ENCODE measurements at regions of chr9 and their contacts with region 1.

Region 1: DNA sequence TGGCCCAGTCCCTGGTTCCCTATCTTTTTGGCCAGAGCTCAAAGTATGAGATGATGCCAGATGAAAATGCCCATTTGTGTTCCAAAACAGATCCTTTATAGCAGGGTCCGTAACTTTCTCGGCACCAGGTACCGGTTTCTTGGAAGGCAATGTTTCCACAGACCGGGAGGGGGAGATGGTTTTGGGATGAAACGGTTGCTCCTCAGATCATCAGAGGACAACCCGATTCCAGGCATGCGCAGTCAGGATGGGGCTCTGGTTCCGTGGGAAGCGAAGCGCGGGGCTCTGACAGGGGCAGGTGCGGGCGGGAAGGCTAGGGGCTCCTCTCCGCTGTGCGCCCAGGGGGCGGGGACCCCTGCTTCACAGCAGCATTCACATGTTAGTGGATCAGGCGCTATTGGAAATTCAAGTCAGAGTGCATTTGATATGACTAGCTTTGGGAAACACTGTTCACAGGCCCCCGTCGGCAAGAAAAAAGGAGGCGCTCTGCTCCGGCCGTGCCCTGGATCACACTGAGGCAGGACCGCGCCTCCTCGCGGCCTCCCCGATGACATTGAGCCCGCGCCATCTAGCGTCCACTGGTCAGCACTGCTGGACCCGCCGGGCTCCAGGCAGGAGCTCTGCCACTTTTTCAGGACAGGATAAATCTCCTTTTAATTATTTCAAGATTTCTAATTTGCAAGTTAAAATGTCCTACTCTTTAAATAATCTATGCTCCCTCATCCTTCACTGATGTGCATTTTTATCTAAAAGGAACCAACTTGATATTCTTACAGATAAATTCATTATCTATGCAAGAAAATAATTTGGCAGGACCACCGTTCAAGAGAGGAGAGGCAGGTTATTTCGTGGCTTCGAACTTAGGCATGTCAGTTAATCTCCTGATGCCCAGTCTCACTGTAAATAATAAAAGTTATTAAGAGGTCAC is 190.0 kb downstream of the FANCC start:
- DNase-seq: peak; percentile 67 to 79
- ATAC-seq: peak; percentile 89 to 98 (median 98)
- H3K4me3 ChIP-seq: no peak overlapping the region
- H3K4me3 Mint-ChIP-seq: no peak overlapping the region
- H3K27ac ChIP-seq: no peak overlapping the region
- H3K27ac Mint-ChIP-seq: no peak overlapping the region
- H3K4me1 ChIP-seq: peaks cover 6% of the 10 kb centered on the region
- H3K4me1 Mint-ChIP-seq: peaks cover 5% of the 10 kb centered on the region in 2 donors
- H3K27me3 ChIP-seq: no peaks in the 10 kb centered on the region
- H3K27me3 Mint-ChIP-seq: no peaks in the 10 kb centered on the region
- CTCF ChIP-seq: peak; percentile 98

Region 2: DNA sequence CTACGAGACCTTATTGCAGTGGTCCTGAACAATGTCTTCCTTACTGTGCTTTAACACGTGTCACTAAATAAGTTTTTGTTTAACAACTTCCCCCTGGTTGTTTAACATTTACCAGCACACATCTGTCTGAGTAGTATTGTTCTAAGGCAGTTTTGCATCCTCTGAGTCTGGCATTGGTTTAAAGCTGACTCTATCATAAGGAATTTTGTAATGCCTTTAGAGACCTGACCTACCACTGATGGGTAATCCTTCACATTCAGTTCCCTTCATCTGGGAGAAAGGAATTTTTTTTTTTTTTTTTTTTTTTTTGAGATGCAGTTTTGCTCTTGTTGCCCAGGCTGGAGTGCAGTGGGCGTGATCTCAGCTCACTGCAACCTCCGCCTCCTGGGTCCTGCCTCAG is 592.6 kb before region 1 on chr9:
- intact Hi-C with region 1: no loop called
- DNase-seq: no peak
- ATAC-seq: no peak
- H3K4me3 ChIP-seq: no peak overlapping the region
- H3K4me3 Mint-ChIP-seq: no peak overlapping the region
- H3K27ac ChIP-seq: no peak overlapping the region
- H3K27ac Mint-ChIP-seq: no peak overlapping the region
- H3K4me1 ChIP-seq: no peaks in the 10 kb centered on the region
- H3K4me1 Mint-ChIP-seq: no peaks in the 10 kb centered on the region
- H3K27me3 ChIP-seq: no peaks in the 10 kb centered on the region
- H3K27me3 Mint-ChIP-seq: peaks cover 7 to 10% of the 10 kb centered on the region in 2 donors
- CTCF ChIP-seq: no peak

Region 3: GRCh38 chr9:94668418-94668932 is 459.0 kb before region 1 on chr9:
- intact Hi-C with region 1: loop called (anchors 2 kb)
- DNase-seq: no peak
- ATAC-seq: no peak
- H3K4me3 ChIP-seq: no peak overlapping the region
- H3K4me3 Mint-ChIP-seq: peak overlapping the region; percentile 93
- H3K27ac ChIP-seq: no peak overlapping the region
- H3K27ac Mint-ChIP-seq: peak overlapping the region in 1 of 2 donors; percentile 75
- H3K4me1 ChIP-seq: no peaks in the 10 kb centered on the region
- H3K4me1 Mint-ChIP-seq: peaks cover 7 to 13% of the 10 kb centered on the region in 2 donors
- H3K27me3 ChIP-seq: no peaks in the 10 kb centered on the region
- H3K27me3 Mint-ChIP-seq: peaks cover 17 to 18% of the 10 kb centered on the region in 2 donors
- CTCF ChIP-seq: no peak